Astrocyte of the cerebellum (primary cell): ENCODE measurements at regions of chr16 and their contacts with region 1.

Region 1: GRCh38 chr16:27040732-27041131 is 26.0 kb upstream of the C16orf82 start:
- DNase-seq: no peak
- H3K4me3 ChIP-seq: no peak overlapping the region
- CTCF ChIP-seq: no peak

Region 2: GRCh38 chr16:26987597-26988010 is 53.1 kb before region 1 on chr16:
- in situ Hi-C with region 1: loop called (anchors 5 kb)
- DNase-seq: peak; percentile 85
- H3K4me3 ChIP-seq: no peak overlapping the region
- CTCF ChIP-seq: no peak

Region 3: GRCh38 chr16:28193530-28194423 is 1153.0 kb after region 1 on chr16:
- in situ Hi-C with region 1: no loop called
- DNase-seq: peak; percentile 65
- H3K4me3 ChIP-seq: peak overlapping the region; percentile 6
- CTCF ChIP-seq: no peak